Psoas muscle (tissue), 8 donors: ENCODE measurements at regions of chr1 and their contacts with region 1.

Region 1: DNA sequence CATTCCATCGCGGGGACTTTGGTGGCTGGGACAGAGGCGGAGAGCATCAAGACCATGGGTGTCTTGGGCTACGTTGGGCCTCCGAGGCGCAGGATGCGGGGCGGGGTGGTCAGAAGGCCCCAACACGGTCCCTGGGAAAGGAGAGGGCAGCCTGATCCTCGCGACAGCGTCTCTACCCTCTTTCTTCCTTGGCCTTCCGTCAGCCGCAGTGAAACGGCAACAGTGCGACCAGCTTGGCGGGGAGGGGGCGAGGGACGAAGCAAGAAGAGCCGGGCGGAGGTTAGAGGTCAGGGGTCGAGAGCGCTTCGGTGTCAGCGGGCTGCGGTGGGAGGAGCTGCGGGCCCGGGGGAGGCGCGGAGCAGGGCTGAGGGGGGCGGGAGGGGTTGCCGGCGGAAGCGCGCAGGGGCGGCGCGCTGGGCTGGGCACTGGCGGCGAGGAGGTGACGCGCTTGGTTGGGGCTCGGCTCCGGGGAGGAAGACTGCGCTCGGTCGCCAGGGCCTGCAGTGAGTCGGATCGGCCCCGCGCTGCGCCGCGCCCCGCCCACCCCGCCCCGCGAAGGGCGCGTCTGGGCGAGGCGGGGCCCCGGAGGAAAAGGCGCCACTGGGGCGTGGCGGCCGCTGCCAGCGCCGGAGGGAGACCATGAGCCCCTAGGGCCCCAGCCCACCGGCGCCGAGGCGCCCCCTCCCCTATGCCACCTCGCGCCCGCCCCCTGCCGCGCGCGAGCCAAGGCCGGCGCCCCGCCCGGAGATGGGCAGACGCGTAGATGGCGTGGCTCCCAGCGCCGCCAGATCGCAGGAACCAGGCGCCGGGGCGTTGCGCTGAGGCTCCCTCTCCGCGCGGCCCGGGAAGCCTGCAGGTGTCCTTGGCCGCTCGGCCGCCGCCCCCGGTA is at the start of gene KCNC4:
- DNase-seq: peak; percentile 91 to 93
- ATAC-seq: peak; percentile 78 to 87 (median 84)
- H3K4me3 ChIP-seq: peak within 1 kb of the TSS; percentile 72
- H3K27ac ChIP-seq: peak within 1 kb of the TSS; percentile 67
- H3K4me1 ChIP-seq: no peaks in the 10 kb centered on the region
- H3K27me3 ChIP-seq: peaks cover 0 to 18% (median 3%) of the 10 kb centered on the region in 3 donors
- CTCF ChIP-seq: no peak
- total RNA-seq, gene KCNC4: 5.1 to 14.5 (median 5.9) TPM

Region 2: DNA sequence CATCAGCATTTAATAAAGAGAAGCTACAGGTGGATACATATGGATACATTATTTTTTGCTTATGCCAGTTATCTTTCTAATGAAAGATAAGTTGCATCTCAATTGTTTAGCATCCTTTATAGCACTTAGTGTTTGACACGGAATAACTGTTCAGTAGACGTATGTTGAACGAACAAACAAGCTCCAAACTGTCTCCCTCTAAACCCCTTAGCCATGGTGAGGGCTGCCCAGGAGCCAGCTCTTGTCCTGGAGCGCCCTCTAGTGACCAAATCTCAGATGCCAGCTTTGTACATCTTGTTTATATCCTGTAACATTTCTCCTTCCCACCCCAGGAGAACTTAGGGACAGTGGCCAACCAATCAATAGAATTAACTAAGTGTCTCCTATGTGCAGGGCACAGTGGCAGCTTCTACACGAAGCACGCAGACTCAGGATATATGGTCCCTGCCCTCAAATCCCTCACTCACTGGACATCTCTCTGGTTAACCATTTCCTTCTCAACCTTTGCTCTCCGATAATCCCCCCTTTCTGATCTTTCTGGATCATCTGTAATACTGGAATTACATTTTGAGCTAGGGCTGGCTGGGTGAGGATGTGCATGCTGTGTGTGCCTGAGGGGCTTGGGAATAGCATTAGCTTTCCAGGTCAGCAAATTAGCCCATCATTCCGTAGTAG is 286.1 kb after region 1 on chr1:
- intact Hi-C with region 1: loop called in 1 of 2 experiments (anchors 10 kb)
- DNase-seq: peak; percentile 70 to 79
- ATAC-seq: peak; percentile 78 to 95 (median 87)
- H3K4me3 ChIP-seq: no peak overlapping the region
- H3K27ac ChIP-seq: no peak overlapping the region
- H3K4me1 ChIP-seq: no peaks in the 10 kb centered on the region
- H3K27me3 ChIP-seq: no peaks in the 10 kb centered on the region
- CTCF ChIP-seq: peak; percentile 90